ENCODE measurements at regions of chr7 and their contacts with region 1.

Region 1: GRCh38 chr7:34165929-34166550 is 260.7 kb downstream of the BMPER start:
- DNase-seq: no peak
- ATAC-seq: no peak
- H3K4me3 ChIP-seq: no peak overlapping the region
- H3K4me3 Mint-ChIP-seq: no peak overlapping the region
- H3K27ac ChIP-seq: no peak overlapping the region
- H3K27ac Mint-ChIP-seq: no peak overlapping the region
- H3K4me1 ChIP-seq: no peaks in the 10 kb centered on the region
- H3K4me1 Mint-ChIP-seq: no peaks in the 10 kb centered on the region
- H3K27me3 ChIP-seq: no peaks in the 10 kb centered on the region
- H3K27me3 Mint-ChIP-seq: no peaks in the 10 kb centered on the region
- CTCF ChIP-seq: no peak

Region 2: DNA sequence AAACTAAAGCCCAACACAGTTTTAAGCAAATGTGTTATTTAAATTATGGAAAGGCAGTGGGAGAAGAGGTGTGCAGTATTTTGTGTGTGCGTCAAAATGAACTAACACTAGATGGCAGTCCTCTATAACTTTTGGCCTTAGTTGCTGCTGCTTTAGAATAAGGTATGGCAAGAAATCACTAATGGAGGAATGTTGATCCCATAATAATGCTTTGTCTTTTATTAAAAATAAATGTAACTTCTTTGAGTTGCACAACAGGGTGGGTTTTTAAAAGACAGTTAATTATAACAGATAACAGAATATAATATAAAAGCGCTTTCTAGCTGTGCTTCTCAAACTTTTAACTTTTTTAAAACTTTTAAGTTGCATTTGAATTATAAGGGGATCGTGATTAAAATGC is 980.3 kb before region 1 on chr7:
- intact Hi-C with region 1: loop called (anchors 5 kb)
- DNase-seq: peak in 1 of 2 donors; percentile 64
- ATAC-seq: peak in 1 of 3 donors; percentile 53
- H3K4me3 ChIP-seq: no peak overlapping the region
- H3K4me3 Mint-ChIP-seq: no peak overlapping the region
- H3K27ac ChIP-seq: no peak overlapping the region
- H3K27ac Mint-ChIP-seq: no peak overlapping the region
- H3K4me1 ChIP-seq: no peaks in the 10 kb centered on the region
- H3K4me1 Mint-ChIP-seq: peaks cover 5% of the 10 kb centered on the region in 2 donors
- H3K27me3 ChIP-seq: no peaks in the 10 kb centered on the region
- H3K27me3 Mint-ChIP-seq: no peaks in the 10 kb centered on the region
- CTCF ChIP-seq: peak; percentile 49

Region 3: DNA sequence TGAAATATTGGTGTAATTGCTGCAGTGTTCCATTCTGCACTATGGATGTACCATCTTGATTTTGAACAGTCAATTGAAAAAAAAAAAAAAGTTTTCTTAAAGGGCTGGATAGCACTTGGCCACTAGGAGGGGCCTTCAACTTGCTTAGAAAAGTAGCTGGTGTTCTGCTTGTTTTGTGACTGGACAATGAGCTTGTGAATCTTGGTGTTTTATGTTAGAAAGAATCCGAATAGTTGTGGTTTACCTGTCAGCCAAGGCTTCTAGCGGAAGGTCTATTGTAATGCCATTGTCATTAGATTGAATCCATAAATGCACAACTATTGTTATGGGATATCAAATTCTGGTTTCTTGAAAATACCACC is 183.6 kb before region 1 on chr7:
- intact Hi-C with region 1: no loop called
- DNase-seq: no peak
- ATAC-seq: no peak
- H3K4me3 ChIP-seq: no peak overlapping the region
- H3K4me3 Mint-ChIP-seq: no peak overlapping the region
- H3K27ac ChIP-seq: no peak overlapping the region
- H3K27ac Mint-ChIP-seq: no peak overlapping the region
- H3K4me1 ChIP-seq: no peaks in the 10 kb centered on the region
- H3K4me1 Mint-ChIP-seq: no peaks in the 10 kb centered on the region
- H3K27me3 ChIP-seq: no peaks in the 10 kb centered on the region
- H3K27me3 Mint-ChIP-seq: no peaks in the 10 kb centered on the region
- CTCF ChIP-seq: no peak